Heart right ventricle (tissue), 16 donors: ENCODE measurements at regions of chr6 and their contacts with region 1.

Region 1: DNA sequence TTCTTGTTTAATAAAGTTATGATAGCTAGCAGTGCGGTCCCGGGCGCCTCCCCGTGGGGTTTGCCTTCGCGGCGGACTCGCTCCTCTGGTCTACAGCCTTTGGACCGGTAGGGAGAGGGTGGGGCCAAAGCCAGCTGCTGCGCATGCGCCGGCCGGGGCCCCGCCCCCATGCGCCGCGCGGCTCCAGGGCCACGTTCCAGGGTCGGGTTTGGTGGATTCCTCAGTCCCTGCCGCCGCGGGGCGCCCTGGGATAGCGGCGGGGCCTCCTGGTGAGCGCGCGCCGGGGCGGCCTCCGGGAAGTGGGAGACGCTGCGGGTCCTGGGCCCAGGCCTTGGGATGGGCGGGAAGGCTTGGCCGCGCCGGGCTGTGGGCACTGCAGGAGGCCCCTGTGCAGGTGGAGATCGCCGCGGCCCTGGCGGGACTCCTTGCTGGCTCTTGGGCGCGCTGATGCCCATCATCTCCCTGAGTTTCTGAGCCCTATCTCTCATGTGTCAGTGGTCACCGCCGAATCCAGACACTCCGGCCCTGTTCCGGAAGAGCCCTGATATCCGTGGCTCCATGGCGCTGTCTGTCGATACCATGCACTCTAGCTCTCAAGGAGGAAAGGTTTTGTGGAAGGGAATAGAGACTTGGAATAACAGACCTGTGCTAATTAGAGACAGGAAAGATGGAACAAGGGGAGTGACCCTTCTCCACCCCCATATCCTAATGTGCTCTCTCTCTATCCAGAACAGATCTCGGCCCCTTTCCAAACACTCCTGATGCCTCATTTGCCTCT is at the start of gene VARS2:
- DNase-seq: peak; percentile 90 to 92
- ATAC-seq: peak; percentile 94 to 98 (median 97)
- H3K4me3 ChIP-seq: peak within 1 kb of the TSS; percentile 40 to 86 (median 62)
- H3K27ac ChIP-seq: peak within 1 kb of the TSS; percentile 76 to 98 (median 93)
- H3K4me1 ChIP-seq: peaks cover 5 to 31% (median 24%) of the 10 kb centered on the region in 9 donors
- H3K27me3 ChIP-seq: no peaks in the 10 kb centered on the region
- CTCF ChIP-seq: peak in 8 of 9 donors; percentile 7 to 65 (median 42)
- total RNA-seq, gene VARS2: 13.4 to 28.4 (median 22.5) TPM

Region 2: GRCh38 chr6:31042806-31043205 is 128.5 kb after region 1 on chr6:
- intact Hi-C with region 1: loop called in 4 of 10 experiments (anchors 2 to 10 kb)
- DNase-seq: peak; percentile 23 to 45
- ATAC-seq: peak in 7 of 8 donors; percentile 42 to 71 (median 61)
- H3K4me3 ChIP-seq: peak overlapping the region in 1 of 10 donors; percentile 5
- H3K27ac ChIP-seq: peak overlapping the region in 2 of 10 donors; percentile 10 to 21
- H3K4me1 ChIP-seq: peaks cover 0 to 9% (median 0%) of the 10 kb centered on the region in 9 donors
- H3K27me3 ChIP-seq: peaks cover 0 to 21% (median 9%) of the 10 kb centered on the region in 7 donors
- CTCF ChIP-seq: peak; percentile 31 to 63 (median 50)

Region 3: DNA sequence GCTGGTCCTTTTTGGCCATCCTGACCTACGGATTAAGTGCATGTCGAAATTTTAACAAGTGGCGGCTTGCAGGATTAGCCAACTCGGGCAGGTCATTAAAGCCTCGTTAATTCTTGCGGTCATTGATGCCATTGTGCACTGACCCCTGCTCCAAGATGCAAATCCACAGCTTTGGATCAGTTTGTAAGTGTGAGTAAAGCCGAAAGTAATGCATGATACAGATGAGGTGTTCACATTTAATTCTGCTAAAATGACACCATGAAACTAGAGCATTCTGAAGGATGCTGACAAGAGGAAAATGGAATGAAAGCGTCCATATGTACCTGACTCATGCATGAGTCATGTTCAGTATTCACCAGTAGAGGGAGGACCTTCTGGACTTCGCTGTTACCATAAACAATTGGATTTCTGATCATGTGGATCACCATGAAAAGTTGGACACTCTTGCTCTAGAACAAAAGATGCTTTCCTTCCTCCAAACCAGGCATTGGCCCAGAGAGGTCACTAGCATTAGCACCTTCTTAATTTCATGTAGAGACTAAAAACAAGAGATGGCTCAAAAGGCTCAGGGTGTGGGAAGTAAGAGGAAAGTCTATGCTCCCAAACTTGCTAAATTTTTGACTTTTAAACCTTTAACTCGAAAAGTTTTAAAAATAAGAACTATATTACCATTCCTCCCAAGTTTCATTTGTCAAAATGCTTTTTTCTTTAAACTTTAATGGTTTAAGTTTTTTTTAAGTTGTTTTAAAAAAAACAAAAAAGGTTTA is 144.0 kb after region 1 on chr6:
- intact Hi-C with region 1: loop called in 1 of 10 experiments (anchors 5 kb)
- DNase-seq: no peak
- ATAC-seq: peak in 1 of 8 donors; percentile 41
- H3K4me3 ChIP-seq: no peak overlapping the region
- H3K27ac ChIP-seq: no peak overlapping the region
- H3K4me1 ChIP-seq: peaks cover 0 to 3% (median 0%) of the 10 kb centered on the region in 9 donors
- H3K27me3 ChIP-seq: peaks cover 0 to 13% (median 3%) of the 10 kb centered on the region in 7 donors
- CTCF ChIP-seq: peak; percentile 24 to 63 (median 46)

Region 4: GRCh38 chr6:31068669-31069340 is 154.5 kb after region 1 on chr6:
- intact Hi-C with region 1: loop called in 8 of 10 experiments (anchors 1 to 5 kb)
- DNase-seq: peak; percentile 74 to 81
- ATAC-seq: peak; percentile 77 to 93 (median 84)
- H3K4me3 ChIP-seq: no peak overlapping the region
- H3K27ac ChIP-seq: no peak overlapping the region
- H3K4me1 ChIP-seq: peaks cover 0 to 13% (median 0%) of the 10 kb centered on the region in 9 donors
- H3K27me3 ChIP-seq: no peaks in the 10 kb centered on the region
- CTCF ChIP-seq: peak; percentile 67 to 91 (median 86)

Region 5: DNA sequence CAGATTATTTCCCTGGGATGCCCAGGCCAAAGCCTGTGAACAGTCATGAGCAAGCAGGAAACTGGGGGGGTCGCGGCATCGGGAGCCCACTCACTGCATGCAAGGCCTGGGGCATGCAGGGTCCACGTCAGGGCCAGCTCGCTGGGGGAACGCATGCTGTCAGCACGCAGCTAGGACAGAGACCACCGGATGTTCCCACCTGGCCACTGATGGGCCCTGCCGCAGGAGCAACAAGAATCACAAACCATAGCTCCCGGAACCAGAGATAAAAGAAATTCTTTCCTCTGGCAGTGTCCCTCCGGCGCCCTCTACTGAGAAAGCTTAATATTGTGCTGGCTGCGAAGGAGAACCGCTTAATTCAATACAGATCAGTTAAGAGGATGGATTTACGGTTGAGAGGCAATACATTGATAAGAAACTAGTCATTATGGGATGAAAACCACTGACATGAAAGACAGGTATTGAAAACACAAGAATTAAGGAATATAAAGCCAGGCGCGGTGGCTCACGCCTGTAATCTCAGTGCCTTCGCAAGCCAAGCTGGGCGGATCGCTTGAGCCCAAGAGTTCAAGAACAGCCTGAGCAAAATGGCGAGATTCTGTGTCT is 165.5 kb after region 1 on chr6:
- intact Hi-C with region 1: loop called in 4 of 10 experiments (anchors 5 kb)
- DNase-seq: peak; percentile 40 to 63
- ATAC-seq: peak in 7 of 8 donors; percentile 63 to 83 (median 67)
- H3K4me3 ChIP-seq: peak overlapping the region in 6 of 10 donors; percentile 1 to 37 (median 34)
- H3K27ac ChIP-seq: no peak overlapping the region
- H3K4me1 ChIP-seq: peaks cover 0 to 12% (median 4%) of the 10 kb centered on the region in 9 donors
- H3K27me3 ChIP-seq: no peaks in the 10 kb centered on the region
- CTCF ChIP-seq: peak; percentile 56 to 90 (median 78)

Region 6: GRCh38 chr6:31087494-31088089 is 173.3 kb after region 1 on chr6:
- intact Hi-C with region 1: loop called in 1 of 10 experiments (anchors 5 kb)
- DNase-seq: peak; percentile 83 to 85
- ATAC-seq: peak; percentile 84 to 97 (median 94)
- H3K4me3 ChIP-seq: no peak overlapping the region
- H3K27ac ChIP-seq: peak overlapping the region in 1 of 10 donors; percentile 2
- H3K4me1 ChIP-seq: peaks cover 0 to 19% (median 8%) of the 10 kb centered on the region in 9 donors
- H3K27me3 ChIP-seq: no peaks in the 10 kb centered on the region
- CTCF ChIP-seq: peak; percentile 73 to 87 (median 81)

Region 7: GRCh38 chr6:32271429-32271828 is 1357.2 kb after region 1 on chr6:
- intact Hi-C with region 1: no loop called
- DNase-seq: no peak
- ATAC-seq: no peak
- H3K4me3 ChIP-seq: no peak overlapping the region
- H3K27ac ChIP-seq: peak overlapping the region in 1 of 10 donors; percentile 50
- H3K4me1 ChIP-seq: peaks cover 0 to 10% (median 0%) of the 10 kb centered on the region in 9 donors
- H3K27me3 ChIP-seq: peaks cover 0 to 3% (median 0%) of the 10 kb centered on the region in 7 donors
- CTCF ChIP-seq: no peak